Left ventricle myocardium inferior (tissue), 1 donor: ENCODE measurements at regions of chr9 and their contacts with region 1.

Region 1: GRCh38 chr9:71604197-71605063 is 163.9 kb downstream of the CEMIP2 start:
- DNase-seq: peak; percentile 66
- H3K4me3 ChIP-seq: no peak overlapping the region
- H3K27ac ChIP-seq: no peak overlapping the region
- H3K4me1 ChIP-seq: no peaks in the 10 kb centered on the region
- H3K27me3 ChIP-seq: no peaks in the 10 kb centered on the region
- CTCF ChIP-seq: peak; percentile 80

Region 2: DNA sequence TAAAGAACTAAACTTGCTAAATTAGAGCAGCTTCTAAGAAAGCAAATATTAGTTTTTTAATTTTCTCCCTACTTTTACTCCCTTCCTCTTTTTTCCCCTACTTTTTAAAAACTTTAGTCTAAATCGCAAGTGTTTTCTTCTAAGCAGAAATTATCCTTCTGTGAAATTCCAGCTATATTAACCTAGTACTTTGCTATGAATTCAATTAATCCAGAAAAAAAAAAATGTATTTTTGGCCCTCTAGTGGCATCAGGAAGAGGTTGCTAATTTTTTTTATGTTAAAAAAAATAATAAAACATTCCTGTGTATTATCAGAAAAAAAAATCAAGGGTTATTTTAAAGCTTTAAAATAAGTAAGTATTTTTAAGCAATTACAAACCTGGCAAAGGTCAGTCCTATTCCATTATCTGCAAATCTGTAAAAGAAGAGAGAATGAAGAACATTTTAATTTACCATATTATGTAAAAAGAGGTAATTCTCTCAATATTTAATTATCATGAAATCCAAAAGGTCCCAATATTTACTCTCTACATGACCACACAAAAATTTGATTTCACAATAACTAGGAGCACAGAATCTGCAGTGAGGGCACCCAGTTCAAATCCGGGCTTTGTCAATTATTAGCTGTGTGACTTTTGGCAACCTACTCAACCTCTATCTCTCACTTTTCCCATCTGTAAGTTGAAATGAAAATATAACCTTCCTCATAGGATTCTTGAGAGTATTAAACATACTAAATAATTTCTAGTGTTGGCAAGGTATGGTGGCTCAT is 111.9 kb after region 1 on chr9:
- intact Hi-C with region 1: loop called (anchors 10 kb)
- DNase-seq: no peak
- H3K4me3 ChIP-seq: no peak overlapping the region
- H3K27ac ChIP-seq: no peak overlapping the region
- H3K4me1 ChIP-seq: peaks cover 4% of the 10 kb centered on the region
- H3K27me3 ChIP-seq: no peaks in the 10 kb centered on the region
- CTCF ChIP-seq: peak; percentile 57

Region 3: GRCh38 chr9:71768388-71769174 is 164.2 kb after region 1 on chr9 and contains the start of gene CEMIP2:
- intact Hi-C with region 1: loop called (anchors 10 kb)
- DNase-seq: peak; percentile 89
- H3K4me3 ChIP-seq: peak within 1 kb of the TSS; percentile 88
- H3K27ac ChIP-seq: peak within 1 kb of the TSS; percentile 98
- H3K4me1 ChIP-seq: peaks cover 54% of the 10 kb centered on the region
- H3K27me3 ChIP-seq: no peaks in the 10 kb centered on the region
- CTCF ChIP-seq: peak; percentile 57
- total RNA-seq, gene CEMIP2: 11.7 TPM